Dorsolateral prefrontal cortex (tissue), 120 donors: ENCODE measurements at regions of chr1 and their contacts with region 1.

Region 1: DNA sequence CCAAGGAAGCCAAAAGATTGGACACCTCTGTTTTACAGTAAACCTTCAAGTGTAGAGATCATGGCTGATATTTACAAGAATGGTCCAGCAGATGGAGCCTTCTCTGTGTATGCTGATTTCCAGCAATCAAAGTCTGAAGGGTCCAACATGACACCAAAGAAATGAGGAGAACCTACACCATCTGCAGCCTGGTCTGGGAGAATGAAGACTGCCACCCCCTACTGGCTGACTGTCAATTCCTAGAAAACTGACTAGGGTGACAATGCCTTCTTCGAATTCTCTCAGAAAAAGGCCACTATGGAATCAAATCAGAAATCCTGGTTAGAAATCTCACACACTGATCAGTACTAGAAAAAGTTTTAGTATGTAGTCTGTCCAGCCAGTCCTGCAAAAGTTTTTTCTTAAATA is 83.3 kb downstream of the CDC42BPA start:
- DNase-seq: no peak
- H3K4me3 ChIP-seq: no peak overlapping the region
- H3K27ac ChIP-seq: peak overlapping the region in 2 of 59 donors; percentile 1 to 14
- H3K27me3 ChIP-seq: no peaks in the 10 kb centered on the region
- CTCF ChIP-seq: peak in 55 of 56 donors; percentile 27 to 74 (median 56)

Region 2: DNA sequence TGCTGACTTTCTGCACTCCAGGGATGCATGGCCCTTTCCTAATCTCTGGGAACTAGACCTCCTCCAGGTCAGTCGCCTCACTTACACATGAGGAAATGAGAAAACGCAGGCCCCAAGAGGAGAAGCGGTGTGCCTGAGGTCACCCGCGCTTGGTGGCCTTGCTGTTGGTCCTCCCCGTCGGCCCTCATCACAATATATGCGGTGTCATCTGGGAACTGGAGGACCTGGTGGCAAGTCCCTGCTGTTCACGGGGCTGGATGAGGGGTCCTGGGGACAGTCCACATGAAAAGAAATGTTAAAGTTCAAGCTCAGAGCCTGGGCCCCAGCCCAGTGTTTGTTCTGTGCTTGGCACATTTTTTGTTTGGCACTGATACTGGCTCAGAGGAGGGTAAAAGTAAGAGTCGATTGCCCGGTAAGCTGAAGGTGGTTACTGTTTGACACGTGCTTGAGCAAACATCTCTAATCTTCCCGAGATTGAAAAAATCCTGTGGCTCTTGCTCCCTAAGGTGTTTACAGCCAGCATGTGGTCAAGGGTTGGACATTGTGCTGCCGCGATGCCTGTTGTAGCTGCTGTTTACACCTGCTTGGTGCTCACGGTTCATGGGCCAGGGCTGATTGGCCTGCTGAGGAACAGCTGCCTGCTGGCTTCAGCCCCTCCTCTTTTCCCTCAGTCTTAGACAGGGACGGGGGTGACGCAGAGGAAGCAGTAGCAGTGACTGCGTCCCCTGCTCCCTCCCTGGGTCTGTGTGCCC is 289.7 kb before region 1 on chr1:
- intact Hi-C with region 1: no loop called
- DNase-seq: no peak
- H3K4me3 ChIP-seq: peak overlapping the region in 1 of 59 donors; percentile 2
- H3K27ac ChIP-seq: peak overlapping the region in 14 of 59 donors; percentile 1 to 58 (median 18)
- H3K27me3 ChIP-seq: no peaks in the 10 kb centered on the region
- CTCF ChIP-seq: no peak

Region 3: DNA sequence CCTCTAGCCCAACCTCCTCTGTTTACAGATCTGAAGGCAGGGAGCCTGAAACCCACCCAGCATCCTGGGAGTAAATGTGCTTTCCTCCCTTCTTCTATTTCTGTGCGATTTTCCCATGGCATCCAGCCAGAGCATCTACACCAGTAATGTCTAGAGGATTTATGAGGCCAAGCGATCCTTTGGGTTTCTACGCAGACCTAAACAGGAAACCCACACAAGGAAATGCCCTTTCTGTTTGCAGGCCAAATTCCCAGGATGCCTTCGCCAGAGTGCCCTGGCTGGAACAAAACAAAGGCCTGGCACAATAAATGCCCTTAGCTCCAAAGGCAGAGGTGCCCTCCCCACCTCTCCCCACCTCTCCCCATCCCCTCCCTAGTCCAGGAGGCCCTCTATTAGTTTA is 193.8 kb after region 1 on chr1:
- intact Hi-C with region 1: loop called in 1 of 2 experiments (anchors 5 kb)
- DNase-seq: no peak
- H3K4me3 ChIP-seq: no peak overlapping the region
- H3K27ac ChIP-seq: peak overlapping the region in 58 of 59 donors; percentile 34 to 100 (median 96)
- H3K27me3 ChIP-seq: no peaks in the 10 kb centered on the region
- CTCF ChIP-seq: no peak